ENCODE measurements at regions of chr22 and their contacts with region 1.

Region 1: GRCh38 chr22:27885977-27886842 is 32.8 kb downstream of the PITPNB start:
- DNase-seq: no peak
- H3K4me3 ChIP-seq: no peak overlapping the region
- H3K27me3 ChIP-seq: no peaks in the 10 kb centered on the region
- CTCF ChIP-seq: peak; percentile 80

Region 2: GRCh38 chr22:27900153-27900552 is 13.9 kb after region 1 on chr22:
- CTCF ChIA-PET with region 1: interaction called, 13 read pairs
- POLR2A ChIA-PET with region 1: no interaction called
- DNase-seq: no peak
- H3K4me3 ChIP-seq: no peak overlapping the region
- H3K27me3 ChIP-seq: no peaks in the 10 kb centered on the region
- CTCF ChIP-seq: no peak

Region 3: DNA sequence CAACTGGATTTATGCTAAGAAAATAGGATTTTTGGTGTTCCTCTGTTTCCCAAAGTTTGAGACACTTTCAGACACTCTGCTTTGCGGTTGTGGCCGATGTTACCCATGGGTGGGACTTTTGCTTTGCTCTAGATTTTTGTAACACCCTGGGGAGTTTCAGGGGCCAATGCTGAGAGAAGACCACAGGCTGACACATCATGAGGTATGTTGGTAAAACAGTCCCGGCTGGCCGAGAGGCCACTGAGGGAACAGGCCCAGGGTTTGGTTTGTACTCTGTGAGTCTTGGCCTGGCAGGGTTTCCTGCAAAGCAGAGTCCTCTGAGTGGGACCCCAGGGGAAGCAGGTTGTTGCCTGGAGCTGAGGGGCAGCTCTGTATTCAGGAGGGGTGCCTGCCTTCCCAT is 111.3 kb after region 1 on chr22:
- CTCF ChIA-PET with region 1: interaction called, 26 read pairs
- POLR2A ChIA-PET with region 1: interaction called, 5 read pairs
- DNase-seq: no peak
- H3K4me3 ChIP-seq: no peak overlapping the region
- H3K27me3 ChIP-seq: no peaks in the 10 kb centered on the region
- CTCF ChIP-seq: no peak

Region 4: DNA sequence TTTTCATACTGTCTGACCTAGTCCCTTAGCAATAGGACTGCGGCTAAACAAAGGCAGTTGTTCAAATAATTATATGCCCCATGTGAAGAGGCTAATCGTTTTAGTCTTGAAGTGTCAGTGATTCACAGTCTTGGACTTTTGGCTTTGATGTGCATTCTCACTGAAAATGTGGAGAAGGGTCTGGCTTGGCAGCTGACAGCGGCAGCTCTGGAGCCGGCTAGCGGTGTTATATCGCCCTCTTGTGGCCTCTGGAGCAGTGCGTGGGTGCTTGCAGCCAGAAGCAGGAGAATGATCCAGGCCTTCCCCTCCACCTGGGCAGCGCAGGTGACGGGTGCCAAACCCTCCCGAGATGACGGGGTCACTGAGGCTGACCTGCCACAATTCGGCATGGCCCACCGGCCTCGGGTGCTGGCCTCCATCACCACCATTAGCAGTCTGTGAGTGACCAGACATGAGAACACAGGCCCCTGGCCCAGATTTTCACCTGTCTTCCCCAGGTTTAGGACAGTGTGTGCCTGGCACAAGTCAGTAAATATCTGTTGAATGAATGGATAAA is 123.1 kb after region 1 on chr22:
- CTCF ChIA-PET with region 1: interaction called, 127 read pairs
- POLR2A ChIA-PET with region 1: no interaction called
- DNase-seq: peak; percentile 35
- H3K4me3 ChIP-seq: no peak overlapping the region
- H3K27me3 ChIP-seq: no peaks in the 10 kb centered on the region
- CTCF ChIP-seq: peak; percentile 96

Region 5: GRCh38 chr22:28075358-28075981 is 189.3 kb after region 1 on chr22:
- CTCF ChIA-PET with region 1: no interaction called
- POLR2A ChIA-PET with region 1: no interaction called
- DNase-seq: peak; percentile 57
- H3K4me3 ChIP-seq: no peak overlapping the region
- H3K27me3 ChIP-seq: no peaks in the 10 kb centered on the region
- CTCF ChIP-seq: no peak

Measured in BJ (cell line).